HepG2 (cell line): ENCODE measurements at regions of chr6 and their contacts with region 1.

Region 1: DNA sequence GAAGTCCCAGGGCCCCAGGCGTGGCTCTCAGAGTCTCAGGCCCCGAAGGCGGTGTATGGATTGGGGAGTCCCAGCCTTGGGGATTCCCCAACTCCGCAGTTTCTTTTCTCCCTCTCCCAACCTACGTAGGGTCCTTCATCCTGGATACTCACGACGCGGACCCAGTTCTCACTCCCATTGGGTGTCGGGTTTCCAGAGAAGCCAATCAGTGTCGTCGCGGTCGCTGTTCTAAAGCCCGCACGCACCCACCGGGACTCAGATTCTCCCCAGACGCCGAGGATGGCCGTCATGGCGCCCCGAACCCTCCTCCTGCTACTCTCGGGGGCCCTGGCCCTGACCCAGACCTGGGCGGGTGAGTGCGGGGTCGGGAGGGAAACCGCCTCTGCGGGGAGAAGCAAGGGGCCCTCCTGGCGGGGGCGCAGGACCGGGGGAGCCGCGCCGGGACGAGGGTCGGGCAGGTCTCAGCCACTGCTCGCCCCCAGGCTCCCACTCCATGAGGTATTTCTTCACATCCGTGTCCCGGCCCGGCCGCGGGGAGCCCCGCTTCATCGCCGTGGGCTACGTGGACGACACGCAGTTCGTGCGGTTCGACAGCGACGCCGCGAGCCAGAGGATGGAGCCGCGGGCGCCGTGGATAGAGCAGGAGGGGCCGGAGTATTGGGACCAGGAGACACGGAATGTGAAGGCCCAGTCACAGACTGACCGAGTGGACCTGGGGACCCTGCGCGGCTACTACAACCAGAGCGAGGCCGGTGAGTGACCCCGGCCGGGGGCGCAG is at the start of gene HLA-A:
- DNase-seq: peak; percentile 94
- ATAC-seq: peak; percentile 98
- H3K4me3 ChIP-seq: peak within 1 kb of the TSS; percentile 77 to 82 (median 80)
- H3K27ac ChIP-seq: peak within 1 kb of the TSS; percentile 60
- H3K4me1 ChIP-seq: peaks cover 28% of the 10 kb centered on the region
- H3K27me3 ChIP-seq: no peaks in the 10 kb centered on the region
- CTCF ChIP-seq: no peak
- EP300 ChIP-seq: no peak
- POLR2A ChIP-seq: peak; percentile 87 to 90
- RAD21 ChIP-seq: no peak
- total RNA-seq, gene HLA-A: 131 and 345 TPM in 2 replicates

Region 2: DNA sequence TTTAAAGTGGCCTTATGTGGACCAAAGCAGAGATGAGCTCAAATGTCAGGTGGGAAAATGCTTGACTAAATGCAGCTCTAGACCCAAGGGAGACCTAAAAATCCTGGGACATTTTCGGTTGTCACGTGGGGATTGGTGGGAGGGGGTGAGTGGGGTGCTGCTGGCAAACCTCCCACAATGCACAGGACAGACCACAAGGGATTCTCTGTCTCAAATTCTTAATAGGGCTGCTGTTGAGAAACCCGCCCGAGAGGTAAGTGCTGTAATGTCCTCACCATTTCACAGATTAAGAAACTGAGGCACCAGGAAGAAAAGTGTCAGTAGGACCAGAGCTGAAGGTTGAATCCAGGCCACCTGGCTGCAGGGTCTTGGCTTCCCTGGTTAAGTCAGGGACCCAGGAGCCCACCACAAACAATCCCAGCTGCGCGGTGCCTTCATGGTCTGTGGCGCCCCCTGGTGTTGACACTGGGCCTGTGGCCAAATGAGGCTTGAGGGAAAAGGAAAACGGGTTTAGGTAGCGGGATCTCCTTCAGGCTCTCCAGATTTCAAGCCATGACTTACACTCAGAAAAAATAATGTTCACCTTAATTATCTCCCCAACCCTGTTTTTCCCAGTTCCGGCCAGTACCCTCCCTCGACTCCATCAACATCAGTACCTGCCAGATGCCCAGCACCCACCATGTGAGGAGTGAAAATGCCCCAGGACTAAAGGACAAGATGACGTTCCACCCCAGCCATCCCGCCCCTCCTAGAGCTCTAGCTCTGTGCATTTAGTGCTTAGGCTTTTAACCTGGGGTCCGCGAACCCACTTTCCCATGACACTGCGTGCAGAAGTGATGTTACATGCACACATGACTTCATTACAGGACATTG is 107.7 kb before region 1 on chr6:
- CTCF ChIA-PET with region 1: no interaction called
- POLR2A ChIA-PET with region 1: no interaction called
- in situ Hi-C with region 1: no loop called
- intact Hi-C with region 1: no loop called
- DNase-seq: no peak
- ATAC-seq: peak; percentile 74
- H3K4me3 ChIP-seq: no peak overlapping the region
- H3K27ac ChIP-seq: no peak overlapping the region
- H3K4me1 ChIP-seq: no peaks in the 10 kb centered on the region
- H3K27me3 ChIP-seq: peaks cover 0 to 3% of the 10 kb centered on the region in 2 experiments; a peak in 1 of 5 replicates
- CTCF ChIP-seq: peak; percentile 89
- EP300 ChIP-seq: no peak
- POLR2A ChIP-seq: no peak
- RAD21 ChIP-seq: peak; percentile 61

Region 3: DNA sequence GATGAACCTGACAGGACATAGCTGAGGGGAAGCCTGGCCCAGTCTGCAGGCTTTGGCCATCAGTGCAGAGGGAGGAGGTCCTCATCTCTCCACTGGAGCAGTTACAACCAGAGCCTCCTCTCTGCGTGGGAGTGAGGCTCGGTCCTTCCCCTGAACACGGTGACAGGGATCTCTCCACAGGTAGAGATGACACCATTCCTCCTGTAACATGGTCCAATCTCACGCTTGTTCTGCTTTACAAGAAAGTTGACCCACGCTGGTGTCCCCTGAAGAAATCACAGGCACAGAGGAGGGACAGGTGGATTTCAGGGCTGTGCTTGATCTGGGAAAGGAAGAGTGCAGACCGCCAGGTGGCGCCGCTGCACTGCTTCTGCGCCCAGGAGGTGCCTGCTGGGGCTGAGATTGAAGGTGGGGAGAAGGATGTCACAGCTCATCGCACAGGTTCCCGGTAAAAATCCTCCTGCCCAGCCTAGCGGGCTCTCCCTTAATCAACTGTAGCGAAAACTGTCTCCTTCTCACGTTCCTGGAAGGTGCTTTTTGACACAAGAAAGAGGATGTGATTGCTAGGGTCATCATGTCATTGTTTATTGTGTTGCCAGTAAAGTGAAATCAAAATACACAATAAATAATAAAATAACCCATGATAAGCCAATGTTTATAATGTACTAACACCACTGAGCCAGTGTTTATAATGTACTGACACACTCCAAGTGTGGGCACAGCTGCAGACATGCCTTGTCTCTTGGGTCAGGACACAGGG is 94.4 kb before region 1 on chr6:
- CTCF ChIA-PET with region 1: no interaction called
- POLR2A ChIA-PET with region 1: no interaction called
- in situ Hi-C with region 1: no loop called
- intact Hi-C with region 1: loop called (anchors 2 kb)
- DNase-seq: peak; percentile 54
- ATAC-seq: peak; percentile 97
- H3K4me3 ChIP-seq: no peak overlapping the region
- H3K27ac ChIP-seq: no peak overlapping the region
- H3K4me1 ChIP-seq: no peaks in the 10 kb centered on the region
- H3K27me3 ChIP-seq: peaks cover 0 to 1% of the 10 kb centered on the region in 2 experiments; a peak in 3 of 5 replicates
- CTCF ChIP-seq: peak; percentile 99
- EP300 ChIP-seq: no peak
- POLR2A ChIP-seq: no peak
- RAD21 ChIP-seq: peak; percentile 99

Region 4: DNA sequence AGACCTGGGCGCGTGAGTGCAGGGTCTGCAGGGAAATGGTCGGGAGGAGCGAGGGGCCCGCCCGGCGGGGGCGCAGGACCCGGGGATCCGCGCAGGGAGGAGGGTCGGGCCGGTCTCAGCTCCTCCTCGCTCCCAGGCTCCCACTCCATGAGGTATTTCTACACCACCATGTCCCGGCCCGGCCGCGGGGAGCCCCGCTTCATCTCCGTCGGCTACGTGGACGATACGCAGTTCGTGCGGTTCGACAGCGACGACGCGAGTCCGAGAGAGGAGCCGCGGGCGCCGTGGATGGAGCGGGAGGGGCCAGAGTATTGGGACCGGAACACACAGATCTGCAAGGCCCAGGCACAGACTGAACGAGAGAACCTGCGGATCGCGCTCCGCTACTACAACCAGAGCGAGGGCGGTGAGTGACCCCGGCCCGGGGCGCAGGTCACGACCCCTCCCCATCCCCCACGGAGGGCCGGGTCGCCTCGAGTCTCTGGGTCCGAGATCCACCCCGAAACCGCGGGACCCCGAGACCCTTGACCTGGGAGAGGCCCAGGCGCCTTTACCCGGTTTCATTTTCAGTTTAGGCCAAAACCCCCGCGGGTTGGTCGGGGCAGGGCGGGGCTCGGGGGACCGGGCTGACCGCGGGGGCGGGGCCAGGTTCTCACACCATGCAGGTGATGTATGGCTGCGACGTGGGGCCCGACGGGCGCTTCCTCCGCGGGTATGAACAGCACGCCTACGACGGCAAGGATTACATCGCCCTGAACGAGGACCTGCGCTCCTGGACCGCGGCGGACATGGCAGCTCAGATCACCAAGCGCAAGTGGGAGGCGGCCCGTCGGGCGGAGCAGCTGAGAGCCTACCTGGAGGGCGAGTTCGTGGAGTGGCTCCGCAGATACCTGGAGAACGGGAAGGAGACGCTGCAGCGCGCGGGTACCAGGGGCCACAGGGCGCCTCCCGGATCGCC is 54.4 kb before region 1 on chr6:
- CTCF ChIA-PET with region 1: no interaction called
- POLR2A ChIA-PET with region 1: no interaction called
- in situ Hi-C with region 1: loop called (anchors 5 kb)
- intact Hi-C with region 1: no loop called
- DNase-seq: no peak
- ATAC-seq: peak; percentile 31
- H3K4me3 ChIP-seq: peak overlapping the region; percentile 62 to 75 (median 65); a peak in 5 of 6 replicates
- H3K27ac ChIP-seq: no peak overlapping the region
- H3K4me1 ChIP-seq: peaks cover 11% of the 10 kb centered on the region
- H3K27me3 ChIP-seq: no peaks in the 10 kb centered on the region
- CTCF ChIP-seq: no peak
- EP300 ChIP-seq: no peak
- POLR2A ChIP-seq: no peak
- RAD21 ChIP-seq: no peak

Region 5: GRCh38 chr6:29953001-29953441 is 10.6 kb after region 1 on chr6:
- CTCF ChIA-PET with region 1: no interaction called
- POLR2A ChIA-PET with region 1: no interaction called
- in situ Hi-C with region 1: no loop called
- intact Hi-C with region 1: no loop called
- DNase-seq: no peak
- ATAC-seq: no peak
- H3K4me3 ChIP-seq: no peak overlapping the region
- H3K27ac ChIP-seq: no peak overlapping the region
- H3K4me1 ChIP-seq: no peaks in the 10 kb centered on the region
- H3K27me3 ChIP-seq: no peaks in the 10 kb centered on the region
- CTCF ChIP-seq: no peak
- EP300 ChIP-seq: no peak
- POLR2A ChIP-seq: no peak
- RAD21 ChIP-seq: no peak

Region 6: DNA sequence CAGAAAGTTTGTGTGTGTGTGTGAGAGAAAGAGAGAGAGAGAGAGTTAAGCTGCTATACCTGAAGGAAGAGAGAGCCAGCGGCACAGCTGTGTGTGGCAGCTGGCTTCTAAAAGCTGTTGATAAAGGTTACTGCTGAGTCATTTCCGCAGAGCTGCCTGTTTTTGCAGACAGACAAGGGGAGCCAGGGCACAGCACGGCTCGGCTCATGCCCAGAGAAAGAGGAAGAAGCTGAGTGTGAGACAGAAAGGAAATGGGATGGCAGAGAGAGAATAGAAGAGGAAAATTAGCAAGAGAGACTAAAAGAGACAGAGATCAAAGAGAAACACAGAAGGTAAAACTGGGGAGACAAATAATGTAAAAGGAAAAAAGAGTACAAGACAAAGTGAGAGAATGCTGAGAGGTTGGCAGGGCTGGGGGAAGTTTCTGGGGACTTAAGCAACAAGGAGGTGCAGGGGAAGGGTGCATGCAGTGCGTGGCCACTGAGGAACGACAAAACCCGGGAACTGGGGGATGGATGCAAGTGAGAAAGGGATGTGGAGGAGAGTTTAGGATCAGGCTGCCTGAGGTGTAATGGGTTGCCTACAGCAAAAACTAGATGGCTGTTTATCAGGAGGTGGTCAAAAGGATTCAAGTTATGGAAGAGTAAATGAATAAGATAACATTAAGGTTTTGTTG is 22.6 kb after region 1 on chr6:
- CTCF ChIA-PET with region 1: no interaction called
- POLR2A ChIA-PET with region 1: interaction called, 8 read pairs
- in situ Hi-C with region 1: no loop called
- intact Hi-C with region 1: loop called (anchors 1 kb)
- DNase-seq: peak; percentile 94
- ATAC-seq: peak; percentile 92
- H3K4me3 ChIP-seq: peak overlapping the region; percentile 75 to 84 (median 77)
- H3K27ac ChIP-seq: peak overlapping the region; percentile 84
- H3K4me1 ChIP-seq: peaks cover 38% of the 10 kb centered on the region
- H3K27me3 ChIP-seq: no peaks in the 10 kb centered on the region; a peak in 1 of 5 replicates
- CTCF ChIP-seq: peak; percentile 7; the same call in 1 of the 2 replicates
- EP300 ChIP-seq: peak in 1 of 2 experiments; percentile 85; a peak in 2 of 4 replicates
- POLR2A ChIP-seq: peak; percentile 73 to 74
- RAD21 ChIP-seq: no peak

Region 7: GRCh38 chr6:30006170-30007131 is 64.0 kb after region 1 on chr6:
- CTCF ChIA-PET with region 1: no interaction called
- POLR2A ChIA-PET with region 1: no interaction called
- in situ Hi-C with region 1: no loop called
- intact Hi-C with region 1: loop called (anchors 5 kb)
- DNase-seq: no peak
- ATAC-seq: peak; percentile 76
- H3K4me3 ChIP-seq: peak overlapping the region; percentile 57 to 77 (median 59)
- H3K27ac ChIP-seq: no peak overlapping the region
- H3K4me1 ChIP-seq: peaks cover 26% of the 10 kb centered on the region
- H3K27me3 ChIP-seq: no peaks in the 10 kb centered on the region; a peak in 1 of 5 replicates
- CTCF ChIP-seq: no peak
- EP300 ChIP-seq: no peak
- POLR2A ChIP-seq: no peak
- RAD21 ChIP-seq: no peak